ENCODE measurements at regions of chr10 and their contacts with region 1.

Region 1: GRCh38 chr10:59830601-59831259 is 75.6 kb downstream of the CCDC6 start:
- DNase-seq: peak; percentile 70
- ATAC-seq: peak; percentile 87
- H3K4me3 Mint-ChIP-seq: no peak overlapping the region
- H3K27ac Mint-ChIP-seq: peak overlapping the region; percentile 22; the same call in 1 of the 2 replicates
- H3K4me1 Mint-ChIP-seq: peaks cover 24% of the 10 kb centered on the region
- H3K27me3 Mint-ChIP-seq: no peaks in the 10 kb centered on the region
- CTCF ChIP-seq: peak; percentile 72

Region 2: DNA sequence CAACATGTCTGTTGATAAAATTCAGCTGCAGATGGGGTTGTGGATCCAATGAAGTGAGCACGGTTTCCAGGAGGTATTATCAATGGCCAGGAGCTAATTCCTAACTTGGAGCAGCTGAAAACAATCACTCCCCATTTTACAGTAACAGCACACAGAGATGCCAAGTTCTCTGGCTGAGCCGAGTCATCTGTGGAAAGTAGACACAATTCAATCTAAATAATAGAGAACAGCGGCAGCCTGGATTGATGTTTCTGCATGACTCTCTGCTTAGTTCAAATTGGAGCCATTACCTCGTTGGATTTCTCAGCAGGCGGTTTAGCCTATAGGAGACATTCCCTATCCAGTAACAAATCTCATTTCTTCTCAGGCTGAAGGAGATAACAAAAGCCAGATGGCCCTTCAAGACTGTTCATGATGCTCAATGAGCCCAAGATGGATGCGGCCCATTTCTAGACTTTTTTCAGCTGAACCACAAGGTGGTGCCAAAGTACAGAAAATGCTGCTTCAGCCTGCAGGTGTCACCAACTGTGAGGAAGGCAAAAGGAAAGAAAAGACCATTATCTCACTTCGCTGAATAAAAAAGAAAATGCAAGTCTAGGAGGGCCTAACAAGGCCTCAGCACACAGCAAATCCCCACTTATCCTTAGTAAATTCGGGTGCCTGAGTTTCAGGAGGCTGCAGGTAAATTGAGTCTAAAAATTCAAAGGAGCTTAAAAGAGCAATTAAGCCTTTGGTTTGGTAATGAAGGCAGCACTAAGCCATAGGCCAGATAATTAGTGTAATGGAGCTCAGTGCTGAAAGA is 204.8 kb before region 1 on chr10:
- CTCF ChIA-PET with region 1: interaction called, 66 read pairs
- POLR2A ChIA-PET with region 1: interaction called, 3 read pairs
- DNase-seq: peak; percentile 22
- ATAC-seq: peak; percentile 85
- H3K4me3 Mint-ChIP-seq: no peak overlapping the region; the same call in 1 of the 2 replicates
- H3K27ac Mint-ChIP-seq: peak overlapping the region; percentile 91
- H3K4me1 Mint-ChIP-seq: peaks cover 18% of the 10 kb centered on the region
- H3K27me3 Mint-ChIP-seq: no peaks in the 10 kb centered on the region
- CTCF ChIP-seq: peak; percentile 72

Region 3: GRCh38 chr10:59709395-59710125 is 121.2 kb before region 1 on chr10 and contains the start of gene SLC16A9:
- CTCF ChIA-PET with region 1: interaction called, 13 read pairs
- POLR2A ChIA-PET with region 1: no interaction called
- DNase-seq: peak; percentile 79
- ATAC-seq: peak; percentile 84
- H3K4me3 Mint-ChIP-seq: peak within 1 kb of the TSS; percentile 79
- H3K27ac Mint-ChIP-seq: no peak within 1 kb of the TSS
- H3K4me1 Mint-ChIP-seq: peaks cover 20% of the 10 kb centered on the region
- H3K27me3 Mint-ChIP-seq: peaks cover 42% of the 10 kb centered on the region
- CTCF ChIP-seq: no peak; the same call in 1 of the 2 replicates
- total RNA-seq, gene SLC16A9: 4.0 to 5.5 TPM (median 4.7 TPM) in 3 replicates

Region 4: GRCh38 chr10:59847326-59847725 is 16.6 kb after region 1 on chr10:
- CTCF ChIA-PET with region 1: interaction called, 64 read pairs
- POLR2A ChIA-PET with region 1: no interaction called
- DNase-seq: peak; percentile 73
- ATAC-seq: peak; percentile 95
- H3K4me3 Mint-ChIP-seq: peak overlapping the region; percentile 45
- H3K27ac Mint-ChIP-seq: peak overlapping the region; percentile 85
- H3K4me1 Mint-ChIP-seq: peaks cover 56% of the 10 kb centered on the region
- H3K27me3 Mint-ChIP-seq: peaks cover 4% of the 10 kb centered on the region; the same call in 1 of the 2 replicates
- CTCF ChIP-seq: no peak

Region 5: DNA sequence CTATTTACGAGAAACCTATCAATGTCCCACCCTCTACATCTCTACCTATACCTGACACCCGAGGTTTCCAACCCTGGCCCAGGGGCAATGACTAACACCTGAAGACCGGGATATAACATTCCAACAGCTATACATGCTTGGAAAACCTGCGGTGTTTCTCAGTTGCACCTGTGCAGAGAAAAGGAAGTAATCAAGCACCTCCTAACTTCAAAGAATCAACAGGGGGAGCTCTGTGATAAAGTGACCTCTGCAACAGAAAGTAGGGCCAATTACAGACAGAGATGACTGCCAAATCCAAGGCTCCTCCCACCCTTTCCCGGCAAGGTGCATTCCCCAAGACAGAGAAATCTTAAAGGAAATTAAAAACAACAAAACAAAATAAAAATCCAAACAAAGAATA is 34.4 kb after region 1 on chr10:
- CTCF ChIA-PET with region 1: interaction called, 17 read pairs
- POLR2A ChIA-PET with region 1: no interaction called
- DNase-seq: peak; percentile 26
- ATAC-seq: peak; percentile 91
- H3K4me3 Mint-ChIP-seq: no peak overlapping the region
- H3K27ac Mint-ChIP-seq: peak overlapping the region; percentile 21; the same call in 1 of the 2 replicates
- H3K4me1 Mint-ChIP-seq: peaks cover 52% of the 10 kb centered on the region
- H3K27me3 Mint-ChIP-seq: no peaks in the 10 kb centered on the region; the same call in 1 of the 2 replicates
- CTCF ChIP-seq: no peak

Region 6: DNA sequence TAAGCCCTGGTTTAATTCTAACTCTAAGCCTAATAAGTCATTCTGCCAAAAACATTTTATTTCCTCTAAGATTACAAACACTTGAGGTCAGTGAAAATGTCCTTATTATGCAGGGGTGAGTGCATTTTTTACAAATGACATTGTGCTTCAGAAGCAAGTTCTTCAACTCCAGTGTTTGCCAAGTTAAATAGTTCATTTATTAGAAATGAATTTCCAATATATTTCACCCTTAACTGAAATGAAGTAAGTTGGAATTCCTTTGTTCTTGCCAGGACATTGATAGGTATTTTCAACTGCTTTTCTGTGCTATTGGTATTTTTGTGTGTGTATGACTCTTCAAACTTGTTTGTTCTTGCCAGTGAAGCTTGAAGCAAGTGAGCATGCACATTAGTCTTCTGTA is 165.1 kb after region 1 on chr10:
- CTCF ChIA-PET with region 1: no interaction called
- POLR2A ChIA-PET with region 1: no interaction called
- DNase-seq: no peak
- ATAC-seq: no peak
- H3K4me3 Mint-ChIP-seq: no peak overlapping the region
- H3K27ac Mint-ChIP-seq: no peak overlapping the region
- H3K4me1 Mint-ChIP-seq: peaks cover 17% of the 10 kb centered on the region
- H3K27me3 Mint-ChIP-seq: no peaks in the 10 kb centered on the region
- CTCF ChIP-seq: no peak

Region 7: DNA sequence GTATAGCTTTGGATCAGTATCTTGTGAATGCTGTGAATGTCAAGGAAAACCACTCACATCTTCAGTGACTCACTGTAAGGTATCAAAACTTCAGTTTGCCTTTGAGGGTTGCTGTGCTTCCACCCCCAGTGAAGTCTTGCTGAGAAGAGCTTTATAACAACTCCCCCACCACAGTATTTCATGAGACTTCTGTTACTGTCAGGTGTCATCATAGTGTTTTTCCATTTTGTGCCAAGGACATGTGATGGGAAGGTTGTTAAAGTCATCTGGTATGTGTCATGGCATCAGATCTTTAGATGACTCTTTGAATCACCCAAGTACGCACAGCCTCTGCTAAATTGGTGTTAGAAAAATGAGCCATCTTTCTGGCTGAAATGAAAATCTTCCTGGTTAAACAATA is 190.6 kb after region 1 on chr10:
- CTCF ChIA-PET with region 1: interaction called, 11 read pairs
- POLR2A ChIA-PET with region 1: no interaction called
- DNase-seq: no peak
- ATAC-seq: no peak
- H3K4me3 Mint-ChIP-seq: no peak overlapping the region
- H3K27ac Mint-ChIP-seq: no peak overlapping the region
- H3K4me1 Mint-ChIP-seq: peaks cover 3% of the 10 kb centered on the region; the same call in 1 of the 2 replicates
- H3K27me3 Mint-ChIP-seq: no peaks in the 10 kb centered on the region
- CTCF ChIP-seq: no peak